ENCODE measurements at regions of chr1 and their contacts with region 1.

Region 1: GRCh38 chr1:206734499-206735142 is 36.0 kb upstream of the IL19 start:
- DNase-seq: peak; percentile 80
- ATAC-seq: peak; percentile 80
- H3K4me3 ChIP-seq: no peak overlapping the region
- H3K4me3 Mint-ChIP-seq: no peak overlapping the region
- H3K27ac ChIP-seq: no peak overlapping the region
- H3K27ac Mint-ChIP-seq: peak overlapping the region; percentile 69
- H3K4me1 ChIP-seq: peaks cover 20 to 37% of the 10 kb centered on the region in 2 donors
- H3K4me1 Mint-ChIP-seq: peaks cover 45% of the 10 kb centered on the region
- H3K27me3 ChIP-seq: no peaks in the 10 kb centered on the region
- H3K27me3 Mint-ChIP-seq: no peaks in the 10 kb centered on the region
- CTCF ChIP-seq: peak; percentile 86

Region 2: GRCh38 chr1:206716870-206717673 is 17.5 kb before region 1 on chr1:
- CTCF ChIA-PET with region 1: interaction called, 10 read pairs
- POLR2A ChIA-PET with region 1: no interaction called
- intact Hi-C with region 1: no loop called
- DNase-seq: peak; percentile 49
- ATAC-seq: no peak
- H3K4me3 ChIP-seq: no peak overlapping the region
- H3K4me3 Mint-ChIP-seq: peak overlapping the region; percentile 24
- H3K27ac ChIP-seq: peak overlapping the region; percentile 35 to 75
- H3K27ac Mint-ChIP-seq: peak overlapping the region; percentile 81
- H3K4me1 ChIP-seq: peaks cover 70 to 77% of the 10 kb centered on the region in 2 donors
- H3K4me1 Mint-ChIP-seq: peaks cover 81% of the 10 kb centered on the region
- H3K27me3 ChIP-seq: no peaks in the 10 kb centered on the region
- H3K27me3 Mint-ChIP-seq: no peaks in the 10 kb centered on the region
- CTCF ChIP-seq: no peak

Region 3: DNA sequence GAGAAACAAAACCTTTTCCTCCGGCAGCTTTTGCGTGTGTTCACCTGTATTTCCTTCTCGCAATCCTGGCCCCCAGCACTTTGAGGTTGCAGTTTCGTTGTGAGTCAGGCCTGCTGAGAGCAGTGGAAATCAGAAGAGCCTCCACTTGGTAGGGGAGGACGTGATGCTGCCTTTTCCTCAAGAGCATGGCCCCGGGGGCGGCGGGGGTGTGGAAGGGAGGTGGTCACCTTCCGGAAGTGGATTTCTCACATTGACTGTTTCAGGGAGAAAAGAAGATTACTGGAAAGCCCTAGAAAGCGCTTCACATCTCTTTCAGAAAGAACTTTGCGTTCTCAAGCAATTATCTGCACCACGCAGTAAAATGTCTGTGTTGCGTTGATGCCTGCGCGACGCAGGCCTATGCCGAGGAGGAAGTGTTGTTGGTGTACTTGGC is 49.9 kb after region 1 on chr1:
- CTCF ChIA-PET with region 1: interaction called, 13 read pairs
- POLR2A ChIA-PET with region 1: no interaction called
- intact Hi-C with region 1: no loop called
- DNase-seq: peak; percentile 78
- ATAC-seq: peak; percentile 64
- H3K4me3 ChIP-seq: no peak overlapping the region
- H3K4me3 Mint-ChIP-seq: peak overlapping the region; percentile 85
- H3K27ac ChIP-seq: no peak overlapping the region
- H3K27ac Mint-ChIP-seq: peak overlapping the region; percentile 94
- H3K4me1 ChIP-seq: peaks cover 56% of the 10 kb centered on the region in 2 donors
- H3K4me1 Mint-ChIP-seq: peaks cover 61% of the 10 kb centered on the region
- H3K27me3 ChIP-seq: no peaks in the 10 kb centered on the region
- H3K27me3 Mint-ChIP-seq: no peaks in the 10 kb centered on the region
- CTCF ChIP-seq: no peak

Region 4: DNA sequence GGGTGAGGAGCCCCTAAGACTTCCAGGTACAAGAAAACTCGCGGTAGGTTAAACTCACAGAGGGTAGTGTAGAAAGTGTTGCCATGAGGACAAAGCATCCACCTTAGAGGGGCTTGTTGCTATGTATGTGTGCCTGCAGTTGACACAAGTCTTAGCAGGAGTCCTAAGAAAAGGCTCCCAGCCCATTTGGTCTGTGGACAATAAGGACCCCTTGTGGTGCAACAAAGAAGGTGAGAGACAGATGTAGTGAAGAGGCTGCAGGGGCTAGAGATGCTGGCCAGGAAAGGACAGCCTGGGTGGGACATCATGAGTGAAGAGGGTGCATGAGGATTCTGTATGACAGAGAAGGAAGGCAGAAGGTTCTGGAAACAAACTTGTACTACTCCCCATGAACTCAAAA is 74.0 kb after region 1 on chr1:
- CTCF ChIA-PET with region 1: interaction called, 278 read pairs
- POLR2A ChIA-PET with region 1: interaction called, 9 read pairs
- intact Hi-C with region 1: loop called (anchors 1 kb)
- DNase-seq: peak; percentile 62
- ATAC-seq: peak; percentile 81
- H3K4me3 ChIP-seq: no peak overlapping the region
- H3K4me3 Mint-ChIP-seq: no peak overlapping the region
- H3K27ac ChIP-seq: no peak overlapping the region
- H3K27ac Mint-ChIP-seq: no peak overlapping the region
- H3K4me1 ChIP-seq: peaks cover 8 to 12% of the 10 kb centered on the region in 2 donors
- H3K4me1 Mint-ChIP-seq: peaks cover 27% of the 10 kb centered on the region
- H3K27me3 ChIP-seq: no peaks in the 10 kb centered on the region
- H3K27me3 Mint-ChIP-seq: no peaks in the 10 kb centered on the region
- CTCF ChIP-seq: peak; percentile 50

Region 5: GRCh38 chr1:206856674-206857464 is 122.2 kb after region 1 on chr1:
- CTCF ChIA-PET with region 1: interaction called, 19 read pairs
- POLR2A ChIA-PET with region 1: no interaction called
- intact Hi-C with region 1: no loop called
- DNase-seq: peak; percentile 43
- ATAC-seq: peak; percentile 61
- H3K4me3 ChIP-seq: no peak overlapping the region
- H3K4me3 Mint-ChIP-seq: no peak overlapping the region
- H3K27ac ChIP-seq: no peak overlapping the region
- H3K27ac Mint-ChIP-seq: no peak overlapping the region
- H3K4me1 ChIP-seq: no peaks in the 10 kb centered on the region
- H3K4me1 Mint-ChIP-seq: peaks cover 4% of the 10 kb centered on the region
- H3K27me3 ChIP-seq: peaks cover 0 to 4% (median 0%) of the 10 kb centered on the region in 4 experiments
- H3K27me3 Mint-ChIP-seq: peaks cover 18% of the 10 kb centered on the region
- CTCF ChIP-seq: peak; percentile 61

Region 6: GRCh38 chr1:206925106-206925736 is 190.6 kb after region 1 on chr1:
- CTCF ChIA-PET with region 1: interaction called, 53 read pairs
- POLR2A ChIA-PET with region 1: no interaction called
- intact Hi-C with region 1: no loop called
- DNase-seq: peak; percentile 84
- ATAC-seq: peak; percentile 53
- H3K4me3 ChIP-seq: peak overlapping the region in 1 of 5 experiments; percentile 17
- H3K4me3 Mint-ChIP-seq: no peak overlapping the region
- H3K27ac ChIP-seq: peak overlapping the region; percentile 88 to 96
- H3K27ac Mint-ChIP-seq: no peak overlapping the region
- H3K4me1 ChIP-seq: peaks cover 82 to 84% of the 10 kb centered on the region in 2 donors
- H3K4me1 Mint-ChIP-seq: peaks cover 37% of the 10 kb centered on the region
- H3K27me3 ChIP-seq: no peaks in the 10 kb centered on the region
- H3K27me3 Mint-ChIP-seq: no peaks in the 10 kb centered on the region
- CTCF ChIP-seq: peak; percentile 19

Measured in B cell (primary cell).